CD14-positive monocyte (primary cell): ENCODE measurements at regions of chr4 and their contacts with region 1.

Region 1: DNA sequence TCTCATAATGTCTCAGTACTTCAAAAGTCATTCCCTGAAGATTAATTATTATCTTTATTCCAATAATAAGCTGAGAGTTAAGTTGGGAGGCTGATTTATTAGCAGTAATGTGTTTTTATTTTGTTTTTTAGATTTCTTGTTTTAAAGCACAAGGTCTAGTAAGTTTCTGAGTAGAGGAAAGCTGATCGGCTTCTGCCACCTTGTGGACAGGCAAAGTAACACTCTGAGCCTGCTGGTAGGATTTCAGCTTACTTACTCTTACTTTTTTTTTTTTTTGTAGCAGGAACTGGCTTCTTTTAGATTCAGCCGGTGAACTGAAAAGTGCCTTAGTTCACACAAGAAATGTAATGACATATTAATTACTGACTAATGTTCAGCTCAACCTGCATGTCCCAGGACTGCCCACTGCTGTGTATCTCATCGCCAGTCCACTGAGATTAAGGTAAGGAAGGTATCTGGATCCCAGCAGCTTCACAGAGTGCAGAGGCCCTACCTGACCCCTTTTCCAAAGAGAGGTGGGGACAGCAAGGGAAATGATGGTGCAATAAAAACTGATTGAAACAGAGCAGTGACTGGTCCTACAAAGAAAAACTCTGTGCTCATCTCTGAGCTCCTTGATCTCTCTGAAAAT is 126.5 kb downstream of the ADGRA3 start:
- DNase-seq: peak in 2 of 3 donors; percentile 5 to 19
- H3K4me3 ChIP-seq: no peak overlapping the region
- H3K4me3 Mint-ChIP-seq: no peak overlapping the region
- H3K27ac ChIP-seq: no peak overlapping the region
- H3K27ac Mint-ChIP-seq: no peak overlapping the region
- H3K4me1 ChIP-seq: no peaks in the 10 kb centered on the region
- H3K4me1 Mint-ChIP-seq: no peaks in the 10 kb centered on the region
- H3K27me3 ChIP-seq: no peaks in the 10 kb centered on the region
- H3K27me3 Mint-ChIP-seq: no peaks in the 10 kb centered on the region
- CTCF ChIP-seq: peak; percentile 74

Region 2: GRCh38 chr4:21780158-21780557 is 609.2 kb before region 1 on chr4:
- intact Hi-C with region 1: loop called in 1 of 2 experiments (anchors 10 kb)
- DNase-seq: no peak
- H3K4me3 ChIP-seq: no peak overlapping the region
- H3K4me3 Mint-ChIP-seq: no peak overlapping the region
- H3K27ac ChIP-seq: no peak overlapping the region
- H3K27ac Mint-ChIP-seq: no peak overlapping the region
- H3K4me1 ChIP-seq: no peaks in the 10 kb centered on the region
- H3K4me1 Mint-ChIP-seq: no peaks in the 10 kb centered on the region
- H3K27me3 ChIP-seq: no peaks in the 10 kb centered on the region
- H3K27me3 Mint-ChIP-seq: peaks cover 2 to 3% (median 2%) of the 10 kb centered on the region in 3 donors
- CTCF ChIP-seq: no peak

Region 3: GRCh38 chr4:21790438-21791029 is 598.8 kb before region 1 on chr4:
- intact Hi-C with region 1: loop called (anchors 10 kb)
- DNase-seq: no peak
- H3K4me3 ChIP-seq: no peak overlapping the region
- H3K4me3 Mint-ChIP-seq: no peak overlapping the region
- H3K27ac ChIP-seq: no peak overlapping the region
- H3K27ac Mint-ChIP-seq: no peak overlapping the region
- H3K4me1 ChIP-seq: no peaks in the 10 kb centered on the region
- H3K4me1 Mint-ChIP-seq: no peaks in the 10 kb centered on the region
- H3K27me3 ChIP-seq: no peaks in the 10 kb centered on the region
- H3K27me3 Mint-ChIP-seq: no peaks in the 10 kb centered on the region
- CTCF ChIP-seq: peak; percentile 55

Region 4: DNA sequence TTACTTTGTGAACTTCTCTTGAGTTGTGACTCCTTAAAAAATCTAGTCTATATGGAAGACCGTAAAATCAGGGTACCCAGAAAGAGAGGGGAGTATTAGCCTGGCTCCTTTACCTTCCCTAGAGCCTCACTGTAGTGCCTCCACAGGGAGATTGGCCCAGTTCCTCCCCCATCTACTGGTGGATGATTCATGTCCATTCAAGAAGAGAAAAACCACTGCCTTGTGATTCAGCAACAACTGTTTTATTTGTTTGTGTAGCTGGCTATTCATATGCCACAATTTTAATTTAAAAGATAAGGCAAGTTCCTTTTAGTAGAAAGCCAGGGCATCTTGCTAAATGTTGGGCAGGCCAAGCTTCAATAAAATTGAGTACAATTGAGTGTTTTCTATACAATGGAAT is 219.0 kb before region 1 on chr4:
- intact Hi-C with region 1: no loop called
- DNase-seq: no peak
- H3K4me3 ChIP-seq: no peak overlapping the region
- H3K4me3 Mint-ChIP-seq: no peak overlapping the region
- H3K27ac ChIP-seq: no peak overlapping the region
- H3K27ac Mint-ChIP-seq: no peak overlapping the region
- H3K4me1 ChIP-seq: no peaks in the 10 kb centered on the region
- H3K4me1 Mint-ChIP-seq: no peaks in the 10 kb centered on the region
- H3K27me3 ChIP-seq: no peaks in the 10 kb centered on the region
- H3K27me3 Mint-ChIP-seq: no peaks in the 10 kb centered on the region
- CTCF ChIP-seq: no peak

Region 5: DNA sequence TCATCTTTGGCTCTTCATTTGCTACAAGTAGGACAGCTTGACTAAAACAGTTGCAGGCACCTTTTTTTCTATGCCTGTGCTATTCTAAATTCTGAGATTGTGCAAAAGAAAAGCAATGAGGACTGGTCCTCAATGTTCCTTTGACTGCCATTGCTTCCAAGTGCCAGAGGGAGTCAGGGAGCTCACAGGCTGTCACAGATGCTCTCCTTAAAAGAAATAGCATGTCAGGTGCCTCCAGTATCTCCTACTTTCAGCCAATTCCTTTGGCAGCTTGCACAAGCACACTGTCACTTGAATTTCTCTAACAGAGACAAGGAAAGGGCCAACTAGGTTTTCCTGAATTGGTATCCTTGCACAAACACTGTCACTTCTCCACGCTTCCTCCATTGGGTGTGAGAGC is 101.7 kb before region 1 on chr4:
- intact Hi-C with region 1: no loop called
- DNase-seq: no peak
- H3K4me3 ChIP-seq: no peak overlapping the region
- H3K4me3 Mint-ChIP-seq: no peak overlapping the region
- H3K27ac ChIP-seq: no peak overlapping the region
- H3K27ac Mint-ChIP-seq: no peak overlapping the region
- H3K4me1 ChIP-seq: no peaks in the 10 kb centered on the region
- H3K4me1 Mint-ChIP-seq: no peaks in the 10 kb centered on the region
- H3K27me3 ChIP-seq: no peaks in the 10 kb centered on the region
- H3K27me3 Mint-ChIP-seq: no peaks in the 10 kb centered on the region
- CTCF ChIP-seq: no peak

Region 6: GRCh38 chr4:22824091-22824490 is 434.7 kb after region 1 on chr4:
- intact Hi-C with region 1: no loop called
- DNase-seq: no peak
- H3K4me3 ChIP-seq: no peak overlapping the region
- H3K4me3 Mint-ChIP-seq: no peak overlapping the region
- H3K27ac ChIP-seq: no peak overlapping the region
- H3K27ac Mint-ChIP-seq: no peak overlapping the region
- H3K4me1 ChIP-seq: no peaks in the 10 kb centered on the region
- H3K4me1 Mint-ChIP-seq: no peaks in the 10 kb centered on the region
- H3K27me3 ChIP-seq: no peaks in the 10 kb centered on the region
- H3K27me3 Mint-ChIP-seq: no peaks in the 10 kb centered on the region
- CTCF ChIP-seq: no peak